ENCODE measurements at regions of chr5 and their contacts with region 1.

Region 1: DNA sequence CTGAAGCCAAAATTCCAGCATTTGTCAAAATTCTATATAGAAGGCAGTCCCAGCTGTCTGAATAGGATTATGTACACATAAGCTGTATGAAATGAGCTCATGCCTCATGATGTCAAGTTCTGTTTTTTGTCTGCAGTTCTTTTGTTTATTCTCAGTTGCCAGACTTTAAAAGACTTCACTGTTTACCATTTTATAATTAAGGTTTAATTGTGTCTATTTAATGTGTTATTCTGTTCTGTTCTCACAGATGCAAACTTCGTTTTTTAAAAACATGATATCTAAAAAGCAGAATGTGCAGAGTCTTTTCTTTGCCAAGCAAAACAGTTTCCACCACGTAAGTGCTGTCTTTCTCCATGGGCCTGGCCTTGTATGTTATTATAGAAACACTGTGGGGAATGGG is 31.1 kb downstream of the ERAP1 start:
- DNase-seq: no peak
- ATAC-seq: no peak
- H3K4me3 ChIP-seq: no peak overlapping the region
- H3K4me3 Mint-ChIP-seq: no peak overlapping the region
- H3K27ac ChIP-seq: no peak overlapping the region
- H3K27ac Mint-ChIP-seq: no peak overlapping the region
- H3K4me1 ChIP-seq: no peaks in the 10 kb centered on the region
- H3K4me1 Mint-ChIP-seq: peaks cover 11% of the 10 kb centered on the region
- H3K27me3 ChIP-seq: no peaks in the 10 kb centered on the region
- H3K27me3 Mint-ChIP-seq: no peaks in the 10 kb centered on the region
- CTCF ChIP-seq: no peak

Region 2: GRCh38 chr5:96790961-96791504 is 14.4 kb after region 1 on chr5:
- CTCF ChIA-PET with region 1: interaction called, 3 read pairs
- POLR2A ChIA-PET with region 1: interaction called, 4 read pairs
- intact Hi-C with region 1: loop called in 1 of 2 experiments (anchors 2 kb)
- DNase-seq: no peak
- ATAC-seq: no peak
- H3K4me3 ChIP-seq: no peak overlapping the region
- H3K4me3 Mint-ChIP-seq: no peak overlapping the region
- H3K27ac ChIP-seq: no peak overlapping the region
- H3K27ac Mint-ChIP-seq: peak overlapping the region; percentile 41
- H3K4me1 ChIP-seq: peaks cover 22% of the 10 kb centered on the region
- H3K4me1 Mint-ChIP-seq: peaks cover 39% of the 10 kb centered on the region
- H3K27me3 ChIP-seq: no peaks in the 10 kb centered on the region
- H3K27me3 Mint-ChIP-seq: no peaks in the 10 kb centered on the region
- CTCF ChIP-seq: no peak

Measured in CD8-positive, alpha-beta T cell (primary cell).